ENCODE measurements at regions of chr3 and their contacts with region 1.

Region 1: DNA sequence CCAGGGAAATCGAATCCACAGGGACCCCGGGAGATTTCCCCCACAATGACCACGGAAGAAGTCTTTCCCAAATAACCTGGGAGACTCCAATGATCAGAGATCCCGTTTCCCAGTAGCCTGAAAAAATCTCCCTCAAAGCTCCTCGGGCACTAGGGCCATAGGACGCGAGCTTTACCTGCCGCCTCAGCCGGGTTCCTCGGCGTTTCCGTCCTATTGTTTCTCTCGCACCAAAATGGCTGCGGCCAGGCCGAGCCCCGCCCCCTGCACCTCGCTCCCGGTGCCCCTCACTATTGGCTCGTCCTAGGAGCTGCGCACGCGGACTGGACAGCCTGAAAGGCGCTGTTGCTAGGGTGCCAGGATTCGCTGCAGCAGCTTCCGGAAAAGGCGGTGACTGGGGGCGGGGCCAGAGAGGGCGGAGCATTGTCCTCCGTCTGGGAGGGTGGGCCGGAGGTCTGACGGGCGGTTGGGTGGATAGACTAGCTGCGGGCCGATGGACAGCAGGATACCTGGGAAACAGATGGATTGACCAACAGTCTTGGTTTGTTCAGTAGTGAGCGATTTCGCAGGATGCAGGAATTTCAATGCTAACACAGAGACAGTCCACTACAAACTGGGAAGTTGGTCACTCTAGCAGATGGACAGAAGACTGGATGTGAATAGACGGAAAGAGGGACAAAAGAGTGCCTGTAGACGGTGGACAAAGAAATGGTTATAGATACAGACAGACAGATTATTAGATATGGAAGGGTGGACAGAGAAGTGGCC is at the start of gene IP6K2:
- DNase-seq: peak; percentile 98
- H3K4me3 Mint-ChIP-seq: peak within 1 kb of the TSS; percentile 93
- H3K27ac Mint-ChIP-seq: peak within 1 kb of the TSS; percentile 98
- H3K4me1 Mint-ChIP-seq: peaks cover 12% of the 10 kb centered on the region
- H3K27me3 Mint-ChIP-seq: no peaks in the 10 kb centered on the region
- CTCF ChIP-seq: no peak
- total RNA-seq, gene IP6K2: 99.3 and 117 TPM in 2 replicates

Region 2: DNA sequence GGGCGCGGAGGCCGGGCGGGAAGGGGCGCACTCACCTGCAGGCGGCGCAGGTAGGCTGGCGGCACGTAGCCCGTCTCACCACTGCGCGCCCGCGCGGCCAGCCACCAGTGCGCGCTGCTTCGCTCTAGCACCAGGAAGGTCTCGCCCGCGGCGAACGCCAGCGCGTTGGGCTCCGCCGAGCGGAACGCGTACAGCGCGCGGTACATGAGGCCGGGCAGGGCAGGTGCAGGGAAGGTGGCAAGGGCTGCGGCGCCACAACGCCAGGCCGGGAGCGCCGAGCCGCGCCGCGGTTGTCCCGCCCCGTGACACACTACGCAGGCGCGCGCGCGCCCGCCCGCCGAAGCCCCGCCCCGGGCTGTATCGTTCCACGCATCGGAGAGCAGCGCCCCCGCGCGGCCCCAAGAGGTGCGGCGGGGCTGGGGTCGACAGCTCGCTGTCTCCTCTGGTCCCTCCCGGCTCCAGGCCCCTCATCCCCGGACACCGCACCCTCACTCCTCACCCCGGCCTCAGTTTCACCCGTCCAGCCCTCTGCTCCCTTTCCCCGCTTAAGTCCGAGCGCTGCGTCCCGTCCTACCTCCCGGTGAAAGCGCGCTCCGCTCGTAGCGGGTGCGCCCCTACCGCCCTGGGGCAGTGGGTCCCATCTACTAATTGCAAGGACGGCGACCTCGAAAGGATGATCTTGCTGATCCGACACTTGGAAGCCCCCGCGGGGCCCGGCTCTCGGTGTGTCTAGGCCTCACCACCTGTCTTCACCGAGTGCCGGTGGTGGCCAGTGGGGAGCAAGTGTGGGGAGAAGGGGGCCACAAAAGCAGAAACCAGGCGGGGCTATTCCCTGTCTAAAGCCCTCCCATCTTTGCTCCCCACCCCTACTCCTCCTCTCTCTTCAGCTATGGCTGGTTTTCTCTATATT is 31.3 kb before region 1 on chr3 and contains the start of gene NCKIPSD:
- CTCF ChIA-PET with region 1: interaction called, 3 read pairs
- POLR2A ChIA-PET with region 1: interaction called, 17 read pairs
- intact Hi-C with region 1: no loop called
- DNase-seq: peak; percentile 85
- H3K4me3 Mint-ChIP-seq: peak within 1 kb of the TSS; percentile 73
- H3K27ac Mint-ChIP-seq: peak within 1 kb of the TSS; percentile 85
- H3K4me1 Mint-ChIP-seq: peaks cover 31% of the 10 kb centered on the region
- H3K27me3 Mint-ChIP-seq: no peaks in the 10 kb centered on the region
- CTCF ChIP-seq: peak; percentile 63
- total RNA-seq, gene NCKIPSD: 23.8 and 26.9 TPM in 2 replicates

Region 3: DNA sequence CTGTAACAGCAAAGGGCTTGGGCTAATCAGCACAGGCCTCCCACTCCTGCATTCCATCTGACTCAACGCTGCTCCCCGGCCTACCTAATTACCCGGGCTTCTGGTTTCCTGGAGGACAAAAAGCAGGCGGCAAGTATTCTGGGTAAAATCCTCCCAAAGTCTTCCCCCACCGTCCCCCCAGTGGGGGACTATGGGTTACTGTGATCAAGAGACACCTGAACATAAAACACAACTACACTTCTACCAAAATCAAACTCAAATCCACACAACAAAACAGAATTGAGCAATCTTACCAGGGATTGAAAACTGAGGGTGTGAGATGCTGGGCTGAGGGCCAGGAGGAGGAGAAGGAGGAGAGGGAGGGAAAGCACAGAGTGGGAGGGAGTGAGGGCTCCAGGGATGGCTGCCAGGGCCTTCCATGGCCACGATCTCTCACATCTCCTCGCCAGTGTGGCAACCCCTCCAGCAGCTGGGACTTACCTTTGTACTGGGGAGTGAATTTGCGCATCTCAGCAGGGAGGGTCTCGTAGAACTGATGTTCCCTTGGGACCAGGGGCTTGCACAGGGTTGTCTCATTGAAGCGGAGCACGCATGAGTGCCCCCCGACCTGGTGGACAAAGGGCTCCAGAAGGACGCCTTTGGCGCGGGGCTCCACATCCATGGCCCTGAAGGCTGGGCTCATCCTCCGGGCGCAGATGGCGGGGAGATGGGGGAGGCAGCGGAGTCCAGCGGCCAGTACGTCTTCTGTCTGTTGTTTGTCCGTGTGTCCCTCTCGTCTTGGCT is 22.4 kb before region 1 on chr3:
- CTCF ChIA-PET with region 1: interaction called, 9 read pairs
- POLR2A ChIA-PET with region 1: interaction called, 114 read pairs
- intact Hi-C with region 1: loop called (anchors 2 kb)
- DNase-seq: peak; percentile 97
- H3K4me3 Mint-ChIP-seq: peak overlapping the region; percentile 85
- H3K27ac Mint-ChIP-seq: peak overlapping the region; percentile 89
- H3K4me1 Mint-ChIP-seq: peaks cover 27% of the 10 kb centered on the region
- H3K27me3 Mint-ChIP-seq: no peaks in the 10 kb centered on the region
- CTCF ChIP-seq: no peak

Region 4: GRCh38 chr3:48727511-48727910 is 10.3 kb after region 1 on chr3:
- CTCF ChIA-PET with region 1: interaction called, 3 read pairs
- POLR2A ChIA-PET with region 1: interaction called, 10 read pairs
- intact Hi-C with region 1: no loop called
- DNase-seq: no peak
- H3K4me3 Mint-ChIP-seq: no peak overlapping the region
- H3K27ac Mint-ChIP-seq: no peak overlapping the region
- H3K4me1 Mint-ChIP-seq: no peaks in the 10 kb centered on the region
- H3K27me3 Mint-ChIP-seq: no peaks in the 10 kb centered on the region
- CTCF ChIP-seq: no peak

Region 5: DNA sequence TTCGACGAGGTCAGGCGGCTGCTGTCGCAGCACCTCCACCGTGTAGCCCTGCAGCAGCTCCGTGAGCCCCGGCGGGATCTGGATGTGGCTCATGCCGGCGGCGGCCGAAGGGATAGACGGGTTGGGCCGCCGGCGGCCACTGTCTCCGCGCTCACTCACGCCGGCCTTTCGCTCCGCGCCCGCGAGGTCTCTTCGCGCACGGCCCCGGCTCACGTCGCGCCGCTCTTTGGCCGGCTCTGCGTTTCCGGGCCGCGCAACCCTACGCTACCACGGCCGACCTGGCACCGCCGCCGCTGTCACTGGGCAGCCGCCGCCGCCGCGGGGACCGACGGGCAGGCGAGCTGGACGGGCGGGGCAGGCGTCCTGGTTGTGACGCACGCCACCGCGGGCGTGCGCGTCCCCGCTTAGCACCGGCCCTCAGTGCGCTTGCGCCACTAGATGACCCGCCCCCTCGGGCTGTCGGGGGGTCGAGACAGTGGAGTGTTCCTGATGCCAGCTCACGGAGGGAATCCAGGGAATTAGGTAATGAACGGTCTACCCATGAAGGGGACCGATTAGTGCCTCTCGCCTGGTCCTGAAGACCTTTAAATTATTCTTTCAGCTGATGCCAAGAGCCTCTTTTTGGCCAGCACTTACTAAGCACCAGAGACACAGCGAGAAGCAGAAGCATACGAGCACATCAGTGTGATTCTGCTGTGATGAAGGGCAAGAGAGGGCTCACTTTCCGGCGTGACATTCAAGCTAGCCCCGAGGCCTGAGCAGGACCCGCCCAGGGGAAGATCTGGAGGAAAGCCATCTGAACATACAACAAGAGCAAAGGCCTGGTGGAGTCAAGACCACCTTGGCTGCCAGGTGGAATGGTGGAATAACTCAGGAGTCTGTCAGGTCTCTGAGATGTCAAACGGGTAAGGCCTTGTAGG is 130.6 kb after region 1 on chr3 and contains the start of gene PRKAR2A:
- CTCF ChIA-PET with region 1: no interaction called
- POLR2A ChIA-PET with region 1: interaction called, 13 read pairs
- intact Hi-C with region 1: no loop called
- DNase-seq: peak; percentile 85
- H3K4me3 Mint-ChIP-seq: peak within 1 kb of the TSS; percentile 87
- H3K27ac Mint-ChIP-seq: peak within 1 kb of the TSS; percentile 93
- H3K4me1 Mint-ChIP-seq: peaks cover 13% of the 10 kb centered on the region
- H3K27me3 Mint-ChIP-seq: no peaks in the 10 kb centered on the region
- CTCF ChIP-seq: no peak
- total RNA-seq, gene PRKAR2A: 51.3 and 61.3 TPM in 2 replicates

Measured in MCF 10A (cell line).